Posterior vena cava (tissue), 2 donors: ENCODE measurements at regions of chr4 and their contacts with region 1.

Region 1: DNA sequence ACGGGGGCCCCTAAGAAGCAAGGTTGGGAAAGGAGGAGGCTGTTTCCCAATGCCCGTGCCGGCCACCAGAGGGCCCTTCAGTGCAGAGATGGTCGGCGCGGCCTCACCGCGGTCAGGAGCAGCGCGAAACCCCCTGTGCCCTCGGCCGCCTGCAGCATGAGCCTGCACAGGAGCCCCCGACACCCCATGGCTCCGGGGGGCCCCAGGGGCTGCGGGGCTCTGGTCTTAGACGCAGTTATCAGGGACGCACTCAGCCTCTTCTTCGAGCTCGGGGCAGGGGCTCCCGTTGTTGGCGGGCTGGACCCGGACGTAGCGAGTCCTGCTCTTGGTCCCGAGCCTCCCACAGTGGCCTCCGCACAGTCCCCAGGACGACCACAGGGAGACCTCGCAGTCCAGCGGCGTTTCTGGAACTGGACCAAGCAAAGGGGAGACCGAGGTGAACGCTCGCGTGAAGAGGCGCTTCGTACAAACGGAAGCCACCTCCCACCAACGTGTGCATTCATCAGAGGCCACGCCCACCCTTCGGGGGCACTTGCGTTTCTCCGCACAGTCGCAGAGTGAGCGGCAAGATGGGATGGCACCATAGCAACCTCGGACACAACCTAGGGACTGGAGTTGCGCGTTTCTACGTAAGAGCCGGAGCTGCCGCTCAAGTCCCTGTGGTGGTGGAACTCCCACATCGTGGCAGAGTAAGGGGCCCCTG is 5.0 kb downstream of the SPON2 start:
- DNase-seq: peak; percentile 93

Region 2: DNA sequence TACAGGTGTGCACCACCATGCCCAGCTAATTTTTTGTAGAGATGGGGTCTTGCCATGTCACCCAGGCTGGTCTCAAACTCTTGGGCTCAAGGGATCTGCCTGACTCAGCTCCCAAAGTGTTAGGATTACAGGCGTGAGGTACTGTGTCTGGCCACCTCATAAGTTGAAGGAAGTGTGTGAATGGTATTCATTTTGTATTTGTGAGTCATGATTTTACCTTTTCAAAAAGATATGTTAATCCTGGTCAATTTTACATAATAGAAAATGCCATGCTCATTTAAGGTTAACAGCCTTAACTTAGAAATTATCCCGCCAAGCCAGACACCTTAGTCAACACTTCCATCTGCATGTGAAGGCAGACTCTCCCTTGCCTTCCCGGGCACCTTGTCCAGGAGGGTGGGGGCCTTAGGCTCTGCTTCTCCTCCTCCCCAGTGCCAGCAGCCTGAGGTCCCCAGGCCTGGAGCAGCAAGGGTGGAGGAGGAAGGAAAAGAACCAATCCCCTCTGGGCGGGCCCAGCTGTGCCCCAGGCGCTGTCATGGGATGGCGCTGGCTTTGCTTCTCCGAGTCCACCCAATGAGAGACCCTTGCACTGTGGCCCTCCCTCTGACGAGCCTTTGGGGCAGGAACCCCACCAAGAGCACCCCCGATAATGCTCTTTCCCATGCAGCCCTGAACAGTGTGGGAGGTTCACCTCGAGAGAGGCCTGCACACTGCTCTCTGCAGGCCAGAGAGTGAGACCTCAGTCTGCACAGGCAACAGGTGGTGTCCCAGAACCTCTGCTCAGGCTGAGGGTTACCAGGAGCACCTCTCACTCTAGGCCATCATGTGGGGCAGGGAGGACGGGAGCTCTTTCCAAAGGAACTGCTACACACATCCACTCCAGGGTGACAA is 91.3 kb before region 1 on chr4:
- intact Hi-C with region 1: loop called in 1 of 2 experiments (anchors 5 kb)
- DNase-seq: peak; percentile 43

Region 3: GRCh38 chr4:1207603-1208265 is 40.3 kb after region 1 on chr4:
- intact Hi-C with region 1: loop called in 1 of 2 experiments (anchors 5 kb)
- DNase-seq: peak; percentile 83

Region 4: DNA sequence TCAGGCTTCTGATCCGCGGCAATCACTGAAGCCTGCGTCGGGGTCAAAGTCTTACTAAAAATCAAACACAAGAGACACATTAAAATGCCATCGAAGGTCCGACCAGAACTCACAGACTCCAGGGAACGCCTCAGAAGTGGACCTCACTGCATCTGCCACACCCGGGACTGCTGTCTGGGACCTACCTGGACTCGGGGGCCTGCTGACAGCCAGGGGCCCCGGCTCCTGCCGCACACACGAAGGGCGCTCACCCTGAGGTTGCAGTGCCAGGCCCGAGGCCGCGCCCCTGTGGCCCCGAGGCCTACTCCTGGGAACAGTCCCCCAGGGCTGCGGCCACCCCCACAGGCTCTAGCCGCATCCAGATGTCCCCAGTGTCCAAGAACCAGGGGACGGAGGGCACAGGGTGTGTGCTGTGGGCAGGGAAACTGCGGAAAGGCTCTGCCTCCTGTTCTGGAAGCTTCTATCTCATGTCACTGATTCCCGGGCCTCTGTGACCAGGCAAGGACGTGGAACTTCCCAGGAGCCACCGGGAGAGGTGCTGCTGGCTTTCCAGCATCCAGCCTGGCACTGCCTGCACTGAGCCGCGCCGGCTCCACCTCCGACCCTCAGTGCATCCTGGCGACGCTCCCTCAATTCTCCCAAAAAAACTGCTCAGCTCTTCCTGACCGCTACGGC is 74.2 kb after region 1 on chr4:
- intact Hi-C with region 1: loop called (anchors 2 to 10 kb)
- DNase-seq: peak; percentile 61

Region 5: GRCh38 chr4:1249148-1249730 is 81.8 kb after region 1 on chr4:
- intact Hi-C with region 1: loop called (anchors 5 to 10 kb)
- DNase-seq: peak; percentile 96